AG04450 (cell line): ENCODE measurements at regions of chr1 and their contacts with region 1.

Region 1: GRCh38 chr1:145858894-145859490 is at the start of gene PIAS3:
- DNase-seq: peak; percentile 88
- H3K4me3 ChIP-seq: peak within 1 kb of the TSS; percentile 95
- H3K27ac ChIP-seq: peak within 1 kb of the TSS; percentile 70
- H3K27me3 ChIP-seq: no peaks in the 10 kb centered on the region
- CTCF ChIP-seq: no peak
- polyA plus RNA-seq, gene PIAS3: 29.2 and 40.1 TPM in 2 replicates

Region 2: DNA sequence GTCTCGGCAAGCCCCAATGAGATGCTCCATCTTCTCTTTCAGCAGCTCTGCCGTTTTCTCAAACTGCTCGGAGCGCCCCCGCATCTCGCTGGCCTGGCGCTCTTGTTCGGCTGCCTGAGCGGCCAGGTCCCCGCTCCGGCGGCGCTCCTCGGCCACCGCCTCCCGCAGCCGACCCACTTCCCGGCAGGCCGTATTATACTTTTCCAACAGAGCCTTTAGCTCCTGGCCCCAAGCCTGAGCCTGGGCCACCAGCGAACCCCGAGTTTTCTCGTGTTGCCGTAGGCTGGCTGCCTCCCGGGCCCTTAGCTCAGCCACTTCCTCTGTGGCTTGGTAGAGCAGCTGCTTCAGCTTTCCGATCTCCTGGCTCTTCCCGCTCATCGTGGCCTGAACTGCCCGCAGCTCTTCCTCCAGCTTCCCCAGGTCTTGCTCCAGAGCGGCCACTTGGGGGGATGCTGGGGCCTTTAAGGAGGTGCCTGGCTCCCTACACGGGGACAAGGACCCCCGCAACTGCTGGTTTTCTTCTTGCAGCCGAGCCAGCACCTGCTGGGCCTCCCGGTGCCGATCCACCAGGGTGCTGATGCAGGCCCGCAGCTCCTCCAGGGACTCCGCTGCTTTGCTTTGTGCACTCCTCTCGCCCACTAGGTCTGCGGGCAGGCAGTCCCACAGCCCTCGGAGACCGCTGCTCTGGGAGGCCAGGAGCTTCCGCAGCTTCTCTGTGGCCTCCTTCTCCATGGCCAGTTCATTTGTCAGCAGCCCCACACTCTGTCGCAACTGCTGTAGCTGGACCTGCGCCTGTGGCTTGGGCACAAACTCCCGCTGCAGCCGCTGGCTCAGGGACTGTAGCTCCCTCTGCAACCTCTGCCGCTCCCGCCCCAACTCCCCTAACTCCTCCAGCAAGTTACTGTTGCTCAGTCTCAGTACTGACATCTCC is 13.3 kb after region 1 on chr1:
- CTCF ChIA-PET with region 1: interaction called, 11 read pairs
- POLR2A ChIA-PET with region 1: interaction called, 38 read pairs
- DNase-seq: no peak
- H3K4me3 ChIP-seq: peak overlapping the region; percentile 59
- H3K27ac ChIP-seq: peak overlapping the region; percentile 77
- H3K27me3 ChIP-seq: peaks cover 8% of the 10 kb centered on the region
- CTCF ChIP-seq: no peak

Region 3: GRCh38 chr1:145885738-145886287 is 26.8 kb after region 1 on chr1 and contains the start of gene ANKRD35:
- CTCF ChIA-PET with region 1: interaction called, 6 read pairs
- POLR2A ChIA-PET with region 1: interaction called, 25 read pairs
- DNase-seq: no peak
- H3K4me3 ChIP-seq: peak within 1 kb of the TSS; percentile 73
- H3K27ac ChIP-seq: no peak within 1 kb of the TSS
- H3K27me3 ChIP-seq: no peaks in the 10 kb centered on the region
- CTCF ChIP-seq: no peak
- polyA plus RNA-seq, gene ANKRD35: 2.6 and 2.7 TPM in 2 replicates

Region 4: GRCh38 chr1:145906954-145907753 is 48.2 kb after region 1 on chr1:
- CTCF ChIA-PET with region 1: interaction called, 26 read pairs
- POLR2A ChIA-PET with region 1: no interaction called
- DNase-seq: no peak
- H3K4me3 ChIP-seq: no peak overlapping the region
- H3K27ac ChIP-seq: no peak overlapping the region
- H3K27me3 ChIP-seq: no peaks in the 10 kb centered on the region
- CTCF ChIP-seq: no peak

Region 5: DNA sequence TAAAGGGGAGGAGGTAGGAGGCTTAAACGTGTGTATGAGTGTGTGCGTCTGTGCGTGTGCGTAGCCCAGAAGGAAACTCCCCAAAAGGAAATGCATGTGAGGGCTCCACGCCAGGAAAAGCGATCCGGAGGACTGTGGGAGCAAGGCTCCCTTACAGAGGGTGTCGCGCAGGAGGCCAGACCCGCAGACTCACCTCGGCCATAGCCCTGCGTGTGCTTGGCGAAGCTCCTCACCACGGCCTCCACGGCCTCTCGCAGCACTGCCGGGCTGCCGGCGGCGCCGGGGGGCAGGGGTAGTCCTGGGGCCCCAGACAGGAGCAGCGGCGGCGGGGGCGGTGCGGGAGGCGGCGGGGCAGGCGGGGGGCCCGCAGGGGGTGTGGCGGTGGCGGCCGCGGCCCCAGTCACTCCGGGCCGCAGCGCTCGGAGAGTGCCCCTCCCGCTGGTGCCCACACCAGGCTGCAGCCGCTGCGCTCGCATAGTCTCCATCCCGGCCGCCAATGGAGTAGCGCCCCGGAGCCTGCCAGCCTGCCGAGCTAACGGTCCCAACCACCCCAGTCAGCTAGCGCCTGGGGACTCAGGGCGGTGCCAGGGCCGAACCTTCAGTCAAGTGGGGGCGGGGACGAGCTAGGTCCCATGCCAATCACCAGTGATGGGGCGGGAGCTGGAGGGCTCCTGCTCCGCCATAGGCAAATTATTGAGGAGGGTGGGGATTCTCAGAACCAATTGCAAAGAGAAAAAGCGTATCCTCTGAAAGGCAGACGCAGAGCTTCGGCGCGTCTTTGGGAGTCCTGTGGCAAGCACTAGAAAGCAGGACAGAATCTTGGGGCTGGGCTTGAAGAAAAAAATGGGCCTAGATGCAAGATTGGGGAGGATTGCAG is 98.7 kb after region 1 on chr1 and contains the start of gene LIX1L:
- CTCF ChIA-PET with region 1: no interaction called
- POLR2A ChIA-PET with region 1: interaction called, 22 read pairs
- DNase-seq: peak; percentile 89
- H3K4me3 ChIP-seq: peak within 1 kb of the TSS; percentile 84
- H3K27ac ChIP-seq: peak within 1 kb of the TSS; percentile 76
- H3K27me3 ChIP-seq: no peaks in the 10 kb centered on the region
- CTCF ChIP-seq: no peak
- polyA plus RNA-seq, gene LIX1L: 39.3 and 47.2 TPM in 2 replicates

Region 6: GRCh38 chr1:145963995-145964901 is 105.3 kb after region 1 on chr1 and contains the starts of genes ANKRD34A and POLR3GL:
- CTCF ChIA-PET with region 1: no interaction called
- POLR2A ChIA-PET with region 1: interaction called, 15 read pairs
- DNase-seq: peak; percentile 72
- H3K4me3 ChIP-seq: peak within 1 kb of the TSS; percentile 79
- H3K27ac ChIP-seq: peak within 1 kb of the TSS; percentile 89
- H3K27me3 ChIP-seq: no peaks in the 10 kb centered on the region
- CTCF ChIP-seq: peak; percentile 15; the same call in 1 of the 2 replicates
- polyA plus RNA-seq, gene ANKRD34A: 0.83 and 1.2 TPM in 2 replicates
- polyA plus RNA-seq, gene POLR3GL: 23.1 and 25.0 TPM in 2 replicates